ENCODE measurements at regions of chr16 and their contacts with region 1.

Region 1: DNA sequence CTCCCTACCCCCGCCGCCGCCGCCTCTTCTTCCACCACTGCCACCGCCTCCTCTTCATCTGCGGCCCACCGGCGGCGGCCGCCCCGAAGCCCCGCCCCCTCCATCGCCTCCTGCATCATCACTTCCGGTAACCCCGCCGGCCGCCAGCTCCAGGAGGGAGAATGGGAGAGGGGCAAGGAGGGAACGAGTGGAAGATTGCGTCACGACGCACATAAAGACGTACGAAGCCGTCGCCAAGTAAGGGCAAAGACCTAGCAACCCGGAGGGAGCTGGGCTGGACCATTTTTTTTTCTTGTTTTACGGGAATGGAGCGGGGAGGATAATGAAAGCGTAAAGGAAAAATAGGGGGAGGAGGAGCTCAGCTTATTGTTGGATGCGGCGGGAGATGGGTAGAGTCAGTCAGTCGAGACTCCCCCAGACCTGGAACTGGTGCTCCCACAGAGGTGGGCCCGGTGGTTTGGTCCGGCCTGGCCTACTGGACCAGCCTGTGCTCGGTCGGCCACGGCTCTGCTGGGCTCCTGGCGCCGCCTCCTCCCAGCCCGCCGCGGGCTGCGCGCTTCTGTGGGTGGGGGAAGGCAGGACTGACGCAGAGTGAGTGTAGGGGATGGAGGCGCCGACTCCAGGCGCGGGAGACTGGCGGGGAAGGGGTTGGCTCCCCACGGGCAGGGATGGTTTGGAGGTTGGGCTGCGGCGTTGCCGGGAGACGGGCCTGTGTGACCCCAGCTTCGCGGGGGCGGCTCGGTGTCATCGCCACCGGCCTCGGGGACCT is at the starts of genes DCUN1D3 and LYRM1:
- DNase-seq: peak; percentile 92 to 99
- H3K4me3 ChIP-seq: peak within 1 kb of the TSS; percentile 80 to 93
- H3K27ac ChIP-seq: peak within 1 kb of the TSS; percentile 96 to 100
- H3K4me1 ChIP-seq: peaks cover 12 to 56% of the 10 kb centered on the region in 2 donors
- H3K27me3 ChIP-seq: no peaks in the 10 kb centered on the region
- CTCF ChIP-seq: no peak
- total RNA-seq, gene DCUN1D3: 9.8 TPM
- total RNA-seq, gene LYRM1: 3.9 TPM

Region 2: GRCh38 chr16:20806168-20807050 is 94.1 kb before region 1 on chr16 and contains the starts of genes ERI2 and REXO5:
- intact Hi-C with region 1: loop called (anchors 5 kb)
- DNase-seq: peak; percentile 80 to 96
- H3K4me3 ChIP-seq: peak within 1 kb of the TSS; percentile 76 to 92
- H3K27ac ChIP-seq: peak within 1 kb of the TSS; percentile 87 to 92
- H3K4me1 ChIP-seq: peaks cover 0 to 5% of the 10 kb centered on the region in 2 donors
- H3K27me3 ChIP-seq: no peaks in the 10 kb centered on the region
- CTCF ChIP-seq: peak in 1 of 3 experiments; percentile 59
- total RNA-seq, gene ERI2: not detected
- total RNA-seq, gene REXO5: 2.1 TPM

Region 3: DNA sequence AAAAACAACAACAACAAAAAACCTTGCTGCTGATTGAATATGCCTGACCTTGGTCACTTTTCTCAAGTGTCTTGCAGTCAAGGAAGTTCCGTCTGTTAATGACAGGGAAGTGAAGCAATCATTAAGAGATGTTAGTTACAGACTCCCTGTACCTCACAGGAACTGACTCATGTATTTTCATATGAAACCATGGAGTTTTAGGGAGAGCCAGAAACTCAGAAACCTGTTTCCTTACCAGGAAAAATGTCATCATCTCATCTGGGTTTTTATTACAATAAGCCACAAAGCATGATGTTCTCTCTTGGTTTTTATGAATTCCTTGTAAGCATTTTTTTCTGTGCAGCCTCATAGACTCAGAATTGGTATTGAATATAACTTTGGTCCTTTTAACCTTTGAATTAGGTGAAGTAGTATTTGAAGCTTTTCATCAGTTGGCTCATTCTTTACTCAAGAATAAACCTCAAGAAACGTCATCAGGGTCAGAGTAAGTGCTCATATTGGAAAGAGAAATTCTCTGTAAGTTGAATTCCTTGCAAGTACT is 10.4 kb after region 1 on chr16:
- intact Hi-C with region 1: loop called (anchors 1 kb)
- DNase-seq: no peak
- H3K4me3 ChIP-seq: no peak overlapping the region
- H3K27ac ChIP-seq: peak overlapping the region; percentile 96 to 100
- H3K4me1 ChIP-seq: peaks cover 26 to 68% of the 10 kb centered on the region in 2 donors
- H3K27me3 ChIP-seq: no peaks in the 10 kb centered on the region
- CTCF ChIP-seq: no peak

Region 4: DNA sequence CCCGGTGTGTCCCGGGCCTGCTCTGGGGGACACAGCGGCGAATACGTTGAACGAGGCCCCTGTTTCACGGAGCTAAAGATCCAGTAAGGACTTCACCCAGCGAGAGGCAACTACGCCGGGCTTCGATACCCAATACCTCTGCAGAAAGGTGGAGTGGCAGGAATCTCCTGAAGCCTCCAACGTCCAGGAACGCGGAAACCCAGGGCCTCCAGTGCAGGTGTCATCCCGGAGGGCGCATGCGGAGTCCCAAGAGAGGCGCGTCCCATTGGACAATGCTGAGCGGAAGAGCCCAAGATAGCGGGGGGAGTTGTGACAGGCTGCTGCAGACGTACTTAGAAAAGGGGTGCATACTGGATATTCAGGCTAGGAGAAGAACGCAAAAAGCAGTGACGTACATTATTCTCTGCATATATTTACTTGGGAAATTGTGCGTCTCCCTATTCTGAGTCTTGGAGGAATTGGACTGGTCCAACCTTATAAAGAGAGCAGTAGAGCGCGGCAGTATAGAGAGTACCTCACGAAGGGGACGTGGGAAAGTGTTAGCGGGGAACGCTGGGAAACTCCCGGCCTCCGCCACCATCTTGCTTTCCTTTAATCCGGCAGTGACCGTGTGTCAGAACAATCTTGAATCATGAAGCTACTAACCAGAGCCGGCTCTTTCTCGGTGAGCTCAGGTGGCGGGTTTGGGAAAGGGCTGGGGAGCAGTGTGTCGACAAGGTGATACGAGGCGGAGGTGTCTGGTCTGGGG is 1052.5 kb after region 1 on chr16 and contains the start of gene UQCRC2:
- intact Hi-C with region 1: loop called (anchors 5 kb)
- DNase-seq: peak; percentile 48 to 92
- H3K4me3 ChIP-seq: peak within 1 kb of the TSS; percentile 84 to 87
- H3K27ac ChIP-seq: peak within 1 kb of the TSS; percentile 92 to 94
- H3K4me1 ChIP-seq: peaks cover 6 to 20% of the 10 kb centered on the region in 2 donors
- H3K27me3 ChIP-seq: no peaks in the 10 kb centered on the region
- CTCF ChIP-seq: peak in 1 of 3 experiments; percentile 2
- total RNA-seq, gene UQCRC2: 66.3 TPM